PC-9 (cell line): ENCODE measurements at regions of chr20 and their contacts with region 1.

Region 1: GRCh38 chr20:58650776-58651558 is at the start of gene STX16:
- DNase-seq: peak; percentile 88 to 93
- H3K4me3 ChIP-seq: peak within 1 kb of the TSS; percentile 95
- H3K27ac ChIP-seq: peak within 1 kb of the TSS; percentile 77
- H3K4me1 ChIP-seq: peaks cover 25% of the 10 kb centered on the region
- H3K27me3 ChIP-seq: no peaks in the 10 kb centered on the region
- CTCF ChIP-seq: peak; percentile 87
- total RNA-seq, gene STX16: 76.3 and 85.5 TPM in 2 replicates

Region 2: GRCh38 chr20:57323034-57323433 is 1327.9 kb before region 1 on chr20:
- CTCF ChIA-PET with region 1: interaction called, 15 read pairs
- POLR2A ChIA-PET with region 1: no interaction called
- intact Hi-C with region 1: no loop called
- DNase-seq: peak; percentile 74 to 85
- H3K4me3 ChIP-seq: no peak overlapping the region
- H3K27ac ChIP-seq: peak overlapping the region; percentile 20; the same call in 1 of the 2 replicates
- H3K4me1 ChIP-seq: peaks cover 40% of the 10 kb centered on the region
- H3K27me3 ChIP-seq: no peaks in the 10 kb centered on the region
- CTCF ChIP-seq: no peak

Region 3: DNA sequence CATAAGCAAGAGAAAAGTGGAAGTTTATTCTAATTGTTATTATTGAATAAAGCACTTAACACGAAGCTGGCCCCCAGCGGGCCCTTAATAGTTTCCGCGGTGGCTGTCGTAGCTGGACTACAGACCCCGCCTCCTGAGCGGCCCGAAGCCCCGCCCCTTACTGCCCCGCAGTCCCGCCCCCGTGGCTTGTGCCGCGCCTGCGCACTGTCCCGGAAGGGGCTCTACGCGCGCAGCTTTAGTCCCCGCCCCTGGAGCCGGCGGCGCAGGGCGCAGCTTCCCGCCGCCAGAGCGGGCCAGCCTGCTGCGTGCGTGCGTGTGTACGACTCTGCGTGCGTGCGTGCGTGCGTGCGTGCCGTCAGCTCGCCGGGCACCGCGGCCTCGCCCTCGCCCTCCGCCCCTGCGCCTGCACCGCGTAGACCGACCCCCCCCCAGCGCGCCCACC is 262.1 kb before region 1 on chr20 and contains the start of gene VAPB:
- CTCF ChIA-PET with region 1: no interaction called
- POLR2A ChIA-PET with region 1: interaction called, 15 read pairs
- intact Hi-C with region 1: no loop called
- DNase-seq: peak; percentile 85 to 98
- H3K4me3 ChIP-seq: peak within 1 kb of the TSS; percentile 61
- H3K27ac ChIP-seq: peak within 1 kb of the TSS; percentile 67
- H3K4me1 ChIP-seq: peaks cover 18% of the 10 kb centered on the region
- H3K27me3 ChIP-seq: no peaks in the 10 kb centered on the region
- CTCF ChIP-seq: no peak
- total RNA-seq, gene VAPB: 73.0 and 80.6 TPM in 2 replicates

Region 4: DNA sequence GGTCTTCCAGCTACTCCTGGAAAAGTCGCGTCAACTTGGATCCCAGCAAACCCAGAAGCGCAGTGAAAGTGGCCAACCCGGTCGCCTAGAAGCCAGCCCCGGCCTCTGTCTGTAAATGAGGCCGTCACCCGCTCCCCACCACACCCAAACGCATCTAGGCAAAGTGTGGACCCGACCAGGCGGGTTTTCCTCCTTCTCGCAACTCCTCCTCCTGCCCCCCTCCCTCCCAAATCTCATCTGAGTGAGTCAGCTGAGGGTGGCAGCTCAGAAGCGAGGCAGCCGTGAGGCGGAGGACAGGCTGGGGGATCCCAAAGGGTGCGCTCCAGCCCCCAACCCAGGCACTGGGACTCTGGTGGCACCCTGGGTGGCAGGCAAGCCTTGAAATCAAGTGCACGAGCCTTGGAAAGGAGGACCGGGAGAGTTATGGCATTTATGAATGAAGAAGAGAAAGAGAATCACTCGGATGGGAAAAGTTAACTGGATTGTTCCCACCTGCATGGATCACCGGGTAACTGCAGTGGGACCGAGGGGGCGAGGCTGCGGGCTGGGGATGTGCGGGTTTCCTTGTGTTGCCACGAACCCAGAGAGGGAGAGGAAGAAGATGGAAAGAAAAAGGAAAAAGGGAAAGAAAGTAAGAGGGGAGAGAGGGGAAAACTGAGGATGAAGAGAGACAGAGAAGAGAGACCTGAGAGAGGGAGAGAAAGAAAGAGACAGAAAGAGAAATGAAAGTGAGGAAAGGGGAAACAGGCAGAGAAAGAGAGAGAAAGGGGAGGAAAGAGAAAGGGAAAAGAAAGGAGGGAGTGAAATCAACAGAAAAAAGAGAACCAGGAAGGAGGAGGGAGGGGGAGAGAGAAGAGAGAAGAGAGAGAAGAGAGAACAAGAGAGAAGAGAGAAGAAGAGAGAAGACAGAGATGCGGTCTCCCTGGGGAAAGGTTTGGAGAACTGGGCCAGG is 135.5 kb before region 1 on chr20 and contains the start of gene APCDD1L:
- CTCF ChIA-PET with region 1: interaction called, 6 read pairs
- POLR2A ChIA-PET with region 1: no interaction called
- intact Hi-C with region 1: loop called (anchors 1 kb)
- DNase-seq: peak; percentile 68 to 76
- H3K4me3 ChIP-seq: peak within 1 kb of the TSS; percentile 57
- H3K27ac ChIP-seq: no peak within 1 kb of the TSS
- H3K4me1 ChIP-seq: peaks cover 31% of the 10 kb centered on the region
- H3K27me3 ChIP-seq: no peaks in the 10 kb centered on the region
- CTCF ChIP-seq: no peak
- total RNA-seq, gene APCDD1L: 2.4 and 3.0 TPM in 2 replicates

Region 5: DNA sequence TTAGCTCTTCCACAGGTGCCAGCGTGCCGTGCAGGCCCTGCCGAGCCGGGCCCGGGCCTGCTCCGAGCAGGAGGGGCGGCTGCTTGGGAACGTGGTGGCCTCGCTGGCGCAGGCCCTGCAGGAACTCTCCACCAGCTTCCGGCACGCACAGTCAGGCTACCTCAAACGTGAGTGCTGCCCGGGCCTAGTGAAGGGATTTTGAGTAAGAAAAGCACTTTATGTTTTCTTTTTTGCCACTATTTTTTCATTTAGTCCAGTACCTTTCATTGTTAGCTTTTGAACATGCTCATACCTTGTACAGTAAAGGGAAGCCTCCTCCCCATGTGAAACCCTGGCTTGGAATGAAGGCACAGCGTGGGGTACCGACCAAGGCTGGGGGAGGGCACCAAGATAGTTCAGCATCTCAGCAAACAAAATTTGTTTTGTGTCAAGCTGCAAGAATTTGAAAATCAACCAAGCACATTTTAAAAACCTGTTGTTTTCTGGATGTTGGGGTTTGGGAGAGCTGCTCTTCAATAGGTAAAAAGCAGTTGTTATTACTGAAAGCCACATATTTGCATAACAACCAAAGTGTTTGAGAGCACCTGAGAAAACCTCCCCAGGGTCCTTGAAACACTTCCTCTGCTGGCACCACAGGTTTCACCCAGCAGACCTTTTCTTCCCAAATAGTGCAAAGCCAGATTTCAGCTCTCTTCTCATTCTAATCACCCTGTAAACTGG is 18.5 kb after region 1 on chr20:
- CTCF ChIA-PET with region 1: no interaction called
- POLR2A ChIA-PET with region 1: no interaction called
- intact Hi-C with region 1: no loop called
- DNase-seq: no peak
- H3K4me3 ChIP-seq: no peak overlapping the region
- H3K27ac ChIP-seq: no peak overlapping the region
- H3K4me1 ChIP-seq: no peaks in the 10 kb centered on the region
- H3K27me3 ChIP-seq: no peaks in the 10 kb centered on the region
- CTCF ChIP-seq: no peak

Region 6: DNA sequence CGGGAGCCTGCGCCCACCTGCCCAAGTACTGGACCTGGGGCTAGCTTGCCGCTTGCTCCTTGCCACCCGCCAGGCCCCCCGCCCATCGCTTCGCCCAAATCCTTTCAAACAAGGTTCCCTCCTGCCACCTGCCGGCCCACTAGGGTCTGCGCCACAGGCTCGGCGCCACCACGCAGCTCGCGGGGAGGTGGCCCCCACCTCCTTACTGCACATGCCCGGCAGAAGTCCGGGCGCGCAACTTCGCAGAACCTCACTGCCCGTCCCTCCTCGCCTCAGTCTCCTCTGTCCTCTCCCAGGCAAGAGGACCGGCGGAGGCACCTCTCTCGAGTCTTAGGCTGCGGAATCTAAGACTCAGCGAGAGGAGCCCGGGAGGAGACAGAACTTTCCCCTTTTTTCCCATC is 188.5 kb after region 1 on chr20:
- CTCF ChIA-PET with region 1: no interaction called
- POLR2A ChIA-PET with region 1: no interaction called
- intact Hi-C with region 1: loop called (anchors 5 kb)
- DNase-seq: peak in 1 of 2 experiments; percentile 23
- H3K4me3 ChIP-seq: no peak overlapping the region
- H3K27ac ChIP-seq: no peak overlapping the region
- H3K4me1 ChIP-seq: no peaks in the 10 kb centered on the region
- H3K27me3 ChIP-seq: peaks cover 38% of the 10 kb centered on the region
- CTCF ChIP-seq: peak; percentile 54; the same call in 1 of the 2 replicates